MCF 10A (cell line): ENCODE measurements at regions of chr14 and their contacts with region 1.

Region 1: DNA sequence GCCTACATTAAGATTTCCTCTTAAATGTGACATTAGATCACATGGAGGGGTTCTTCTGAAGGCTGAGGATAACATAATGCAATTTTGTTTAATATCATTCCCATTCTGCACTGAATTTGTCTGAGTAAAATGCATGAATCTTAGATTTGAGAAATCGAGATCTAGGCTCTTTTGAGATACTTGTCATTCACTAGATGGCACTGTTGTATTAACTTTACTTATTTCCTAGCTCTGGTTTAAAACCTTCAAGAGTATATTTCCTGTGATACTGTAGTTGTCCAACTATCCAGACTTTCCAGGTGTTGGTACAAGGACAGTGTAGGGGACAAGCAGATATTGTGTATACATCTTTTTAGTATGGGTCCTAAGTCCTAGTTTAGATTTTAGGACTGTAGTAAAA is 91.7 kb upstream of the SEL1L start:
- DNase-seq: peak; percentile 40
- H3K4me3 Mint-ChIP-seq: no peak overlapping the region
- H3K27ac Mint-ChIP-seq: no peak overlapping the region
- H3K4me1 Mint-ChIP-seq: no peaks in the 10 kb centered on the region
- H3K27me3 Mint-ChIP-seq: peaks cover 21% of the 10 kb centered on the region
- CTCF ChIP-seq: peak; percentile 38

Region 2: GRCh38 chr14:81565441-81566290 is 59.7 kb before region 1 on chr14:
- CTCF ChIA-PET with region 1: interaction called, 8 read pairs
- POLR2A ChIA-PET with region 1: no interaction called
- intact Hi-C with region 1: loop called (anchors 2 kb)
- DNase-seq: peak; percentile 48
- H3K4me3 Mint-ChIP-seq: no peak overlapping the region
- H3K27ac Mint-ChIP-seq: no peak overlapping the region
- H3K4me1 Mint-ChIP-seq: peaks cover 6% of the 10 kb centered on the region
- H3K27me3 Mint-ChIP-seq: peaks cover 31% of the 10 kb centered on the region
- CTCF ChIP-seq: peak; percentile 60